GM23248 (cell line): ENCODE measurements at regions of chr4 and their contacts with region 1.

Region 1: GRCh38 chr4:156983366-156983765 is 11.8 kb upstream of the PDGFC start:
- DNase-seq: peak; percentile 66
- H3K4me3 ChIP-seq: no peak overlapping the region
- H3K27ac ChIP-seq: no peak overlapping the region
- H3K4me1 ChIP-seq: peaks cover 6% of the 10 kb centered on the region
- H3K27me3 ChIP-seq: no peaks in the 10 kb centered on the region

Region 2: GRCh38 chr4:155478336-155478825 is 1505.0 kb before region 1 on chr4:
- in situ Hi-C with region 1: no loop called
- DNase-seq: peak; percentile 9
- H3K4me3 ChIP-seq: no peak overlapping the region
- H3K27ac ChIP-seq: no peak overlapping the region
- H3K4me1 ChIP-seq: no peaks in the 10 kb centered on the region
- H3K27me3 ChIP-seq: no peaks in the 10 kb centered on the region

Region 3: DNA sequence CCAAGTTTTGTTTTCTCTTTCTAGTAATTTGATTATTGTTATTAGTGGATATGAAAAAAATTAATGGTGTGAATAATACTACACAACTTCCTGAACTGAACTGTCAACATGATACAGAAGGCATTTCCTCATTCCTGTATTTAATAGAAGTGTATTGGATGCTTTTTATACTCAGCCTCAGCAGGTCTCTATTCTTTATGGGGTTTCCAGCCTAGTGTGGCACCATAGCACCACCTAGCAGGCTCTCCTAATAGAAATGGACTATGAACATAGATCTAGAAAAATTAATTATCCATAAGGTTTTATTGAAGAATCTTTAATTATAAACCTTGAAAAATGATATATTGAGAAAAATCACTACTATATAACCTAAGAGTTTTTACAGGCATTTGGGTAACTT is 145.0 kb after region 1 on chr4:
- in situ Hi-C with region 1: loop called (anchors 10 kb)
- DNase-seq: peak; percentile 60
- H3K4me3 ChIP-seq: no peak overlapping the region
- H3K27ac ChIP-seq: no peak overlapping the region
- H3K4me1 ChIP-seq: no peaks in the 10 kb centered on the region
- H3K27me3 ChIP-seq: no peaks in the 10 kb centered on the region

Region 4: GRCh38 chr4:157196050-157196449 is 212.7 kb after region 1 on chr4:
- in situ Hi-C with region 1: no loop called
- DNase-seq: no peak
- H3K4me3 ChIP-seq: no peak overlapping the region
- H3K27ac ChIP-seq: no peak overlapping the region
- H3K4me1 ChIP-seq: no peaks in the 10 kb centered on the region
- H3K27me3 ChIP-seq: peaks cover 7% of the 10 kb centered on the region; the same call in 1 of the 2 replicates

Region 5: GRCh38 chr4:157271166-157271869 is 288.0 kb after region 1 on chr4:
- in situ Hi-C with region 1: no loop called
- DNase-seq: no peak
- H3K4me3 ChIP-seq: no peak overlapping the region
- H3K27ac ChIP-seq: no peak overlapping the region
- H3K4me1 ChIP-seq: no peaks in the 10 kb centered on the region
- H3K27me3 ChIP-seq: no peaks in the 10 kb centered on the region; the same call in 1 of the 2 replicates